BJ (cell line): ENCODE measurements at regions of chr7 and their contacts with region 1.

Region 1: DNA sequence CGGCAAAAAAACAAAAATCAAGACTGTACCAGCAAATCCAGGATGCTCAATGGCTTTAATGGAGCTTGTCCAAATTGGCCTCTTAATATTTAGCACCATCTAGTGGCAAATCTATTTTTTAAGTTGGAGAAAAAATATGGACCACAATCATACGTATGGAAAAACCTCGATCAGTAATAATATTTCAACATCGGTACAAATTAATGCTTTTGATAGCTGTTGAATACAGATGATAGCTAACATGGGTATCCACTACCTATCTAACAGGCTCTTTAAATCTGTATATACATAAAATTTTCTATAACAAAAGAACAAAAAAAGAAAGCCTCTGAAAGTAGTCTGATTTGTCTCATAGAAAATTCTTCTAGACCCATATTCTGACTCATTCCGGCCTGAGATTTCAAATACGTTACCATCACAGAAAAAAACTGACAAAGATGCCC is 29.2 kb downstream of the COA1 start:
- DNase-seq: no peak
- H3K4me3 ChIP-seq: no peak overlapping the region
- H3K27me3 ChIP-seq: no peaks in the 10 kb centered on the region
- CTCF ChIP-seq: peak; percentile 58

Region 2: DNA sequence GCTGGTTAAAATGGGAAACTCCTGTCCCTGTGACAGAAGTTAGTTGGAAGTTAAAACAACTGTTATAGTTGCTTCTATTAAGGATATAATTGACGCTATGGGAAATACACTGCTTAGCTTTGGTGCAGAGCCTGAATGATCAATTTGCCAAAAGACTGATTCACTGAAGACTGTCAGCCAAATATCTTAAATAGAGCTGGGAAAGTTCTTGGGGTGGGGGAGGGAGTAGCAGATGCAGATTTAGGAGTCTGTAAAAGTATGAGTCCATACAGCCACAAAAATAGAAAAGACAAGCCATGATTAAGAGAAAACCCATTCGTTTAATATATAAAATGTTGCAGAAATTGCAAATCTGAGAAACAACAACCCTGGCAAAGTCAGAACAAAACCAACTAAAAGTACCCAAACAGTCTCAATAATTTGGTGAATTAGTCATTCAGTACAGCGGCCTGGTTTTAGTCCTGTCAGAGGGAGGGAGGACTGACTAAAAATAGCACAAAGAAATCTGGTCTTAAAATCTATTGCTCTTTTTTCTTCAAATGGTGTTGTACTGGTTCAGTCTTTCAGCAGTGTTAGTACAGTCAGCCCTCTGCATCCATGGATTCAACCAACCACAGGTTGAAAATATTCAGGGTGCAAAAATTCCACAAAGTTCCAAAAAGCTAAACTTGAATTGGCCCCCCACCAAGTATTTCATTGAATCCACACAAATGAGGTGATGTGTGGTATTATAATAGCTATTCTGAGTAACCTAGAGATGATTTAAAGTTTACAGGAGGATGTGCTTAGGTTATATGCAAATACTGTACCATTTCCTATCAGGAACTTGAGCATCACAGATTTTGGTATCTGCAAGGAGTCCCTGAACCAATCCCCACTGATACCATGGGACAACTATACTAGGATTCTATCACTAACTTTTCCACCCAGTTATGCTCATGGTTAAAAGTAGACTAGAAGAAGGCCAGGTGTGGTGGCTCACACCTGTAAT is 87.2 kb before region 1 on chr7:
- CTCF ChIA-PET with region 1: interaction called, 15 read pairs
- POLR2A ChIA-PET with region 1: no interaction called
- DNase-seq: peak; percentile 38
- H3K4me3 ChIP-seq: no peak overlapping the region
- H3K27me3 ChIP-seq: no peaks in the 10 kb centered on the region
- CTCF ChIP-seq: no peak

Region 3: DNA sequence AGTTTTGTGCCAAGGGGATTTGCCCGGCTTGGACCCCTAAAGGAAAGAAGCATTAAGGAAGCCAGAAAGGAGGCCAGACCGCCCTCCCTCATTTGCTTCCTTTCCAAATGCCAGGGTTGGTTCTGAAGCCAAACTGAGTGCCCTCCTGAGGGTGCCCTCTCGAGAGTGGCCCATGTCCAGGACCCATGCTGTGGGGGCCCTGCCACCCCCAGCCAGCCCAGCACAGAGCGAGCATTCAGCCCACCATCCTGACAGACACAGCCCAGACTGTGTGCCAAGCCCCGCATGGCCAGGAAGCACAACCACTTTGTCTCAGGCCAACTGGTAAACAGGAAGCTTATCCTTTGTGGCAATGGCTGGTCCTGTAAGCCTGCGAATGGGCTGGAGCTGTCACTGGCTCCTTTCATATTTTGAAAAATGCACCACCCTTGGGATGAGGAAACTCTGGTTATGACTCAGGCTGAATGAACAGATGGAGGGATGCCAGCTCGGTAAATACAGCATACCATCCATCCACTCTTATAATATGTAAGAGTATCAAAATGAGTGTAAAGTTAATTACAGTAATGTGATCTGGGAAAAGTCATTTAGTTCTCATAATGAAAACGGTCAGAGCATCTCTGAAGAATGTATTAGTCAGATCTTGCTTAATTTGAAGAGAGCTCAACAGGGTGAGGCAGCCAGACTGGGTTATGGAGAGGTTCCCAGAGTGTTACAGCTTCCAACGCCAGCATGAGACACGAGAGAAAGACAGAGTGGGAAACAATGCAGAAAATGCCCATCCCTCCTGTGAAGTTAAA is 52.2 kb before region 1 on chr7:
- CTCF ChIA-PET with region 1: interaction called, 37 read pairs
- POLR2A ChIA-PET with region 1: no interaction called
- DNase-seq: peak; percentile 100
- H3K4me3 ChIP-seq: no peak overlapping the region
- H3K27me3 ChIP-seq: no peaks in the 10 kb centered on the region
- CTCF ChIP-seq: no peak

Region 4: GRCh38 chr7:43721193-43721806 is 21.2 kb after region 1 on chr7:
- CTCF ChIA-PET with region 1: interaction called, 12 read pairs
- POLR2A ChIA-PET with region 1: no interaction called
- DNase-seq: no peak
- H3K4me3 ChIP-seq: no peak overlapping the region
- H3K27me3 ChIP-seq: no peaks in the 10 kb centered on the region
- CTCF ChIP-seq: peak; percentile 50